Posterior vena cava (tissue), 2 donors: ENCODE measurements at regions of chr20 and their contacts with region 1.

Region 1: GRCh38 chr20:13299401-13299800 is 78.3 kb downstream of the ISM1 start:
- DNase-seq: no peak

Region 2: DNA sequence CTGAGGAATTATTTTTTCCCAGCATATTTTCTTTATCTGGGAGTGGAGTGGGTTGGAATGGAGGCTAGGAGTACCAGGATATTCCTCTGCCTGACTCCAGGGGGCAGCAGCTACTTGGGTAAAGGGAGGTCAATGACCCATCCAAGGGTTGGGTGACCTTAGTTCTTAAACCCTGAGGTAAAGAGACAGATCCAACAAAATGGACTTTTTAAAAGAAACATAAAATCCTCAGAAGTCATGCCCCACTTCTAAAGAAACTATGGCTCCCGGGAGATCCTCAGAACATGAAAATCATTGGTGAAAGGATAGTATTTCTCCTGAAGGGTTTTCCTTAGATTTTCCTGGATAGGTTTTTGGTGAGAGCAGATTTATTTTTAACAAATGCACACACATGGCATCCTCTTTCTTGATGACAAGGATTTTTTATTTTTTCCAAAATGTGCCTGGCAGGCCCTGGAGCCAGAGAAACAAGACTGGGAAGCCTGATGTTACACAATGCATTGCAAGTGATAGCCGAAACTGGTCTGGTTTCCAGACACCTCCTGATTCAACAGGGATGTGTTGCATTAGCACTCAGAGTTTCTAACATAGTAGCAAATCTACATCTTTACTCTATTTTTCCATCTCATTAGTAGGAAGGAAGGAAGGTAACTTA is 1622.6 kb before region 1 on chr20:
- intact Hi-C with region 1: loop called in 1 of 2 experiments (anchors 10 kb)
- DNase-seq: no peak

Region 3: DNA sequence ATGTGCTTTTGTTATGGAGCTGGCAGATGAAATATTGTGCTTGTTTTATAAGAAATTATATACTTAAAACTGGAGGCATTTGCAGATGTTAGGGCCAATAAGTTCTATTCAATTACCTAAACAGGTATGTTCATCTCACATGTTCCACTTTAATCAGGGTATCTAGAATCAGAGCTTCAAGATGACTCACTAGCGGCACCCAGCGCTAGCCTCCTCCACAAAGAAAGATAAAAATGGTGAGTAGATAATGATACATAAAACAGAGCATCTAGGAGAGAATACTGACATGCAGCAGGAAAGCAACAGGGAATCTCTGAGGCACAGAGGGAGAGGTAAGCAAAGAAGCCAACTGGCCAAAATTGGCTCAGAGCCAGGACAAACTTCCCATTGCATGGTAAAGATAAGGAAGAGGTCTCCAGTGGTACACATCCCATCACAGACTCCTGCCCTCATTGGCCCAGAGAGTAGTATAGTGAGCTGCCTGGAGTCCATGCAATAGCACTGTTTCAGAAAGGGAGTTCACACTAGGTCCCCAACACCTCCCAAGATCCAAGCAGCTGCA is 491.3 kb before region 1 on chr20:
- intact Hi-C with region 1: no loop called
- DNase-seq: no peak